ENCODE measurements at regions of chr17 and their contacts with region 1.

Region 1: DNA sequence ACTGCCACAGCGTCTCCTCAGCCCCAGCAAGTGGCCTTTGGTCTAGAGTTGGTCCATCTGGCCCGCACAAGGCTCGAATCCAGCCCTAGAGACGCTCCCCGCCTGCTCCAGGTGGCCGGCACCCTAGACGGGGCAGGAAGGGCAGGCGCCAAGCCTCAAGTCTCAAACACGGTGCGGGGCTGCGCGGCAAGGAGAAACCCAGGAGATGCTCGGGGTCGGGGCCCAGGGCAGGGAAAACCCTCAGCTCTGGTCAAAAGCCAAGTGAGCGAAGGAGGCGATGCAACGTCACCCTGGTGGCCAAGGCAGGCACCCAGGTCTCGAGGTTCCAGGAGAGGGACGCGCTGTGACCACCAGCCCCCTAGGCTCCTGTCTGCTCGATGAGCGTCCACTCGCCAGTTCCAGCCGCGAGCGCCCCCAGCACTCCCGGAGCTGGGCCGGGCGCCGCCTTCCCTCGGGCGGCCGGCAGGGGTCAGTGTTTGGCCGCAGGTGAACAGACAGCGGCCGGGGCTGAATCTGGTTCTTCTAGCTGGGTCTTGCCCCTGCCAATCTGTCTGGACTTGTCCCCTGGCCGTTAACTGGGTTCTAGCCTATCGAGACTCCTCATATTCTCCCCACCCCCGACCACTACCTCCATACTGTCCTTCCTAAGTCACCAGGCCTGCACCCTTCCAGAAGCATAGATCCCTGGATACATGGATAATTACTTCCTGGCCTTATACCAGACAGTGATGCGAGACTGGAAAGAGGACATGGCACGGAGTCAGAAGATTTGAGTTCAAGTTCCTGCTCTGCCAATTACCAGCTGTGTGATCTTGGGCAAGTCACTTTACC is 44.0 kb downstream of the PRAC1 start:
- DNase-seq: peak; percentile 57
- ATAC-seq: peak; percentile 78 to 84

Region 2: GRCh38 chr17:48791128-48792032 is 113.0 kb after region 1 on chr17:
- intact Hi-C with region 1: loop called (anchors 2 to 5 kb)
- DNase-seq: peak; percentile 83
- ATAC-seq: peak; percentile 88 to 93

Region 3: DNA sequence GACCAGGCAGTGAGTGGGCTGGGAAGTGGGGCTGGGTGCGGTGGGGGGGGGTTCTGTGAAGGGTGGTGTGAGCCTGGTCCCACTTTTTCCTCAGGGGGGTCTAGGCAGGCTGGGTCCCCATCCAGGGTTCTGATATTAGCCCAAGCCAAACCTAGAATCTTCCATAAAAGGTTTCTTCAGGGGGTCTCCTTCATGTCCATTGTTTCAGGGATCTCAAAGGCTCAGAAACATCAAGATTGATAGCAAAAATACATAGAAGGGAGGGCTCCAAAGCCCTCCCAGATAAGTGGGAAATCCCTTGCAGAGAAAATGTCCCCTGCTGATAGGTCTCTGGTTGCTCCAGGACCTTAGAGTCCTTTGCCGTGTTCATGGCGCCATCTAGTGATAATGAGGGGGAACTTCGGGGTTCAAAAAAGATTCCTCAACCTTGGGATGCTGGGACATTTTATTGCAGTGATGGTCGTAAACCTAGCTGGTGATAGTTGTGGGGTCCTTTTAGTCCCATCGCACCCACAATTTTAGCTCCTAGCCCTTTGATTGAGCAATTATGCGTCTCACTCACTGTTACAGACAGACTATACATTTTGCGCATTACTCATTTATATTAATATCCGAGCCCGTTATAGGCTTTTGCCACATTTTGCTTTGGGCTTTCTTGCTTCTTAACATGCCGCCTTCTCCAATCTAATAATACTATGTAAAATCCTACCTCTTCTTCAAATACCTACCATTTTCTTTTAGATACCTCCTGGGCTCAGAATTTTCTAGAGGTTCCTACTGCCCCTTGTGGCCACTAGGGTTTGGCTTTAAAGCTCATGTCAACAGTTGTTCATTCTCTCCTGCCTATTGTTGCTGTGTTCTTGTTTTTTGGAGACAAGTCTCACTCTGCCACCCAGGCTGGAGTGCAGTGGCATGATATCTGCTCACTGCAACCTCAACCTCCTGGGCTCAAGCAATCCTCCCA is 353.9 kb after region 1 on chr17:
- intact Hi-C with region 1: loop called in 1 of 2 experiments (anchors 5 kb)
- DNase-seq: no peak
- ATAC-seq: peak; percentile 76 to 85